Mammary epithelial cell (primary cell): ENCODE measurements at regions of chr17 and their contacts with region 1.

Region 1: DNA sequence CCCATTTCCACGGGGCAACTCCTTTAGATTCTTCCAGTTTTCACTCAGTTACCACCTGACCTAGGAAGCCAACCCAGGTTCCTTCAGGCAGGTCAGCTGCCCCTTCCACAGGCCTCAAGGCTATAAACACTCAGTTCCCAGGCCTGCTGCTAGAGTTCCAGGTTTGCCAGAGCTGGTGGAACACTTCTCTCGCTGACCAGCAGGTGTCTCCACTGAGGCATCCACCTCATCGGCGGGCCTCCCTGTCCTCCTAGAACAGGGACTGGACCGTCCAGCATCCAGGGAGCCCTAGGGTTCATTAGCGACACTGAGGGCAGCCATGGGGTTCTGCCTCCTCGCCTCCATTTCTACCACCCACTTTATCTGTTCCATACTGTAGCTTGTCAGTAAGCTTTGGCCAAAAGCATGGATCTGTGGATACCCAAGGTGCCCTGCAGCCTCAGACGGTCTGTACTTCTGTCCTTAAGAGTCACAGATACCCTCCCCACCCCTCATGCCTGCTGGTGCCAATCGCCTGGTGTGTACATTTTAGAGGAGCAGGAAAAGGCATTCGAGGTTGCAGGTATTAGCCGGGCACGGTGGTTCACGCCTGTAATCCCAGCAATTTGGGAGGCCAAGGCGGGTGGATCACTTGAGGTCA is 29.0 kb downstream of the PIMREG start:
- DNase-seq: peak; percentile 56
- H3K4me3 ChIP-seq: no peak overlapping the region
- H3K27ac ChIP-seq: no peak overlapping the region
- H3K4me1 ChIP-seq: peaks cover 38% of the 10 kb centered on the region
- H3K27me3 ChIP-seq: no peaks in the 10 kb centered on the region
- CTCF ChIP-seq: peak; percentile 96 to 98

Region 2: DNA sequence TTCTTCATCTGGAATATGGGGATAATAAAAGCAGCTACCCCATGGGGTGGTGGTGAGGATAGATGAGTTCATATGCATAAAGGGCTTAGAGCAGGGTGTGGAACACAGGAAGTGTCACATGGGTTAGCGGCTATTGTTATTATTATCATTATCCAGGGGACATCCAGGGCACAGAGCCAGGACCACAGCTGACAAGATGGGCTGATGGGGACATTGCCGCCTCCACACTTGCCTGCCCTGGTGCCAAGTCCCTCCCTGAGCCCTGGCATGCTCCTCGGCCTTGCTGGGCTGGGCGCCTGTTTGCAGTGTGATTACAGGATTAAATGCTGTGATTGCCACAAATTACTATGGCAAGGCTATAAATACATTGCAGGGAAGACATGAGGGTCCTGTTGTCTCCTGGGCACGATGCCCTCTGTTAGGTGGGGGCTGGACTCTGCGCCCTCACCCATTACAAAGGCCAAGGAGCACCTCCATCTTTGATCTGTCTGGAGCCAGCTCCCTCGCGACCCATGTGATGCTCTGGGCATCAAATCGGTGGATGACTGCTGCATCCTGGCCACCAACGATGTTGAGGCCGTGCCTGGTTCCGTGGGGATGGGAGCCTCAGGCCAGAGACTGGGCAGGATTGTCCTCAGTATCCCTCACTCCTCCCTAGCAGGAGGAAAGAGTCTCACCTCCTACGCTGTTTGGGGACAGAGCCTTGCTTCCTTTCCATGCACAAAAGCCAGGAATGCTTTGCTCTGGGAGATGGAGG is 14.2 kb after region 1 on chr17:
- CTCF ChIA-PET with region 1: no interaction called
- dilution Hi-C with region 1: no loop called
- in situ Hi-C with region 1: no loop called
- intact Hi-C with region 1: no loop called
- DNase-seq: no peak
- H3K4me3 ChIP-seq: no peak overlapping the region
- H3K27ac ChIP-seq: no peak overlapping the region
- H3K4me1 ChIP-seq: no peaks in the 10 kb centered on the region
- H3K27me3 ChIP-seq: no peaks in the 10 kb centered on the region
- CTCF ChIP-seq: no peak

Region 3: DNA sequence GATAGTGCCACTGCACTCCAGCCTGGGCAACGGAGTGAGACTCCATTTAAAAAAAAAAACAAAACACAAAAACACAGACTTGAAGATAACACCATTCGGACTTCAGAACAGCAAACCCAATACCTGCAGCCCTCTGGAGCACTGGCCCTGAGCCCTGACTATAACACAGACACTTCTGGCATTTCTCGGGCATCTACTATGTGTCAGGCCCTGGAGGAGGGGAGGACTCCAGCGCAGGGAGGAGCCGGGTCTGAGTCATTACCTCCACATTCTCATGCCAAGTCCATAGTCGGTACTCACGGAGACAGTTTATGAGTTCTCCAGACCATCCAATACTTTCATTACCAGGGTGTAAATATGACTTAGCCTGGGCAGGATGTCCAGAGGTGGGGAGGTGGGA is 34.3 kb after region 1 on chr17:
- CTCF ChIA-PET with region 1: interaction called, 3 read pairs
- dilution Hi-C with region 1: no loop called
- in situ Hi-C with region 1: no loop called
- intact Hi-C with region 1: loop called (anchors 2 kb)
- DNase-seq: peak; percentile 86
- H3K4me3 ChIP-seq: no peak overlapping the region
- H3K27ac ChIP-seq: no peak overlapping the region
- H3K4me1 ChIP-seq: peaks cover 30% of the 10 kb centered on the region
- H3K27me3 ChIP-seq: no peaks in the 10 kb centered on the region
- CTCF ChIP-seq: no peak

Region 4: GRCh38 chr17:6567529-6568183 is 94.4 kb after region 1 on chr17:
- CTCF ChIA-PET with region 1: interaction called, 3 read pairs
- dilution Hi-C with region 1: no loop called
- in situ Hi-C with region 1: no loop called
- intact Hi-C with region 1: loop called (anchors 1 kb)
- DNase-seq: peak; percentile 91
- H3K4me3 ChIP-seq: peak overlapping the region in 2 of 3 experiments; percentile 27 to 43
- H3K27ac ChIP-seq: peak overlapping the region; percentile 62
- H3K4me1 ChIP-seq: peaks cover 16% of the 10 kb centered on the region
- H3K27me3 ChIP-seq: no peaks in the 10 kb centered on the region
- CTCF ChIP-seq: peak in 1 of 2 donors; percentile 46

Region 5: GRCh38 chr17:6608321-6608720 is 135.1 kb after region 1 on chr17:
- CTCF ChIA-PET with region 1: no interaction called
- dilution Hi-C with region 1: no loop called
- in situ Hi-C with region 1: no loop called
- intact Hi-C with region 1: loop called (anchors 1 kb)
- DNase-seq: peak; percentile 70
- H3K4me3 ChIP-seq: no peak overlapping the region
- H3K27ac ChIP-seq: peak overlapping the region; percentile 40
- H3K4me1 ChIP-seq: peaks cover 9% of the 10 kb centered on the region
- H3K27me3 ChIP-seq: no peaks in the 10 kb centered on the region
- CTCF ChIP-seq: no peak

Region 6: GRCh38 chr17:6651357-6651918 is 178.2 kb after region 1 on chr17 and contains the starts of genes C17orf100 and MED31:
- CTCF ChIA-PET with region 1: interaction called, 5 read pairs
- dilution Hi-C with region 1: no loop called
- in situ Hi-C with region 1: loop called (anchors 10 kb)
- intact Hi-C with region 1: loop called (anchors 1 kb)
- DNase-seq: peak; percentile 92
- H3K4me3 ChIP-seq: peak within 1 kb of the TSS; percentile 83 to 100 (median 99)
- H3K27ac ChIP-seq: peak within 1 kb of the TSS; percentile 100
- H3K4me1 ChIP-seq: peaks cover 38% of the 10 kb centered on the region
- H3K27me3 ChIP-seq: no peaks in the 10 kb centered on the region
- CTCF ChIP-seq: no peak
- total RNA-seq, gene C17orf100: 0.67 to 2.5 TPM
- total RNA-seq, gene MED31: 8.3 to 21.0 TPM